ENCODE measurements at regions of chr7 and their contacts with region 1.

Region 1: DNA sequence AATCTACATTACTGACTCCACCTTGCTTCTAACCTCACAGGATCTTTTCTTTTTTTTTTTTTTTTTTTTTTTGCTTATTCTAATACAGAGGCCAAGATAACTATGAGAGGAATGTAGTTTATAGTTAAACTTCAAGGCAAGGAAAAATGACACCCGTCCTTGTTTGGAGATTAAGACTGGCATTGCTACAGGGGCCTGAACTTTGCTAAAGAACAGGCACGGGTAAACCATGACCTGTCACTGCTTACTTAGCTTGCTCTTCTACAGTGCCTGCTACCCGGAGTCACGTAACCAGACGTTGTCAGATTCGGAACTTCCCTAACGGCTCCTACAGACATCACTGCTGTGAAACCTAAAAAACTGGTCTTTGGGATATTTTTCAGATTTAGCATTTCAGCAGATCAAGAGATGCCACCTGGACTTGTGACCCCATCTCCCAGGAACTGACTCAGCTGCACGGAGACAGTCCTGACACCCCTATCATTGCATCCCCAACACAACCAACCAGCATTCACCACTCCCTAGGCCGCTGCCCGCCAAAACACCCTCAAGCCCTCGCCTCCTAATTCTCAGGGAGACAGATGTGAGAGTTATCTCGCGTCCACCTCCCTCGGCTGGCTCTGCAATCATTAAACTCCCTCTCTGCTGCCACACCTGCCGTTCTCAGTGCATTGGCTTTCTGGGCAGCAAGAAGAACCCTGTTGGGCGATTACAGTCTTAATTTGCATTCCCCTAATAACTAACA is 27.5 kb downstream of the MAD1L1 start:
- DNase-seq: no peak
- H3K4me3 ChIP-seq: no peak overlapping the region
- H3K27ac ChIP-seq: no peak overlapping the region
- H3K27me3 ChIP-seq: no peaks in the 10 kb centered on the region
- CTCF ChIP-seq: no peak

Region 2: DNA sequence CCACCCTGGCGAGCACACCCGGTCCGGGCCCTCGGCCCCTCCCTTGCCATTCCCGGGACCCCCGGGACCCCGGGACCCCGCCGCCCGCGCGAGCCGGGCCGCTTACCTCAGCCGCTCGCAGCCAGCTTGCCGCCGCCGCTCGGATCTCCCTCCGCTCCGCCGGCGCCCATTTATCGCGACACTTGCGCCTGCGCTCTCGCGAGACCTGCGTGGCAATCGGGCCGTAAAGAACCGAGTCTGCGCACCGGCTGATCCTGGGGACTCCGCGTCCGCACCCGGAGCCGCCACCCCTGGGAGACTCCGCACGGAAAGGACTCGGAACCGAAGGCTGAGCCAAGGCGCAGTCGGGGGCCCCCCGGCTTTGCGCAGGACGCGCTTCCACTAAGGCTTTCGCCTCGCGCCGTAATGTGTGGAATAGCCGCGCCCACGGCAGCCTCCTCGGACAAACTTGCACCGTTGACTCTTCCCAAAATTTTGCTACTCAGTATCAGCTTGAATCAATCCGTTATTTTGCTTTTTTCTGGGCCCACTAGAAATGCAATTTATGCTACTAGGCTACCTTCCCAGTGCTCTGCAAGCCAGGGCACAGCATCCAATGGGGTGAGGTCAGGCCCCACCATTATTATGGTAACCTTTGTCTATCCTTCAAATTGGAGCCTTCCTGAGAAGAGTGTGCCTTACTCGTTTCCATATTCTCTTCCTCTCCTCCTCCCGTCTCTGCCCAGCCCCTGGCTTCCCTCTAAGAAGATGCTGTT is 27.7 kb after region 1 on chr7 and contains the start of gene MAD1L1:
- CTCF ChIA-PET with region 1: no interaction called
- POLR2A ChIA-PET with region 1: interaction called, 15 read pairs
- DNase-seq: peak; percentile 78
- H3K4me3 ChIP-seq: peak within 1 kb of the TSS; percentile 77
- H3K27ac ChIP-seq: peak within 1 kb of the TSS; percentile 39
- H3K27me3 ChIP-seq: no peaks in the 10 kb centered on the region
- CTCF ChIP-seq: no peak
- polyA plus RNA-seq, gene MAD1L1: 11.9 and 13.5 TPM in 2 replicates